ENCODE measurements at regions of chr1 and their contacts with region 1.

Region 1: DNA sequence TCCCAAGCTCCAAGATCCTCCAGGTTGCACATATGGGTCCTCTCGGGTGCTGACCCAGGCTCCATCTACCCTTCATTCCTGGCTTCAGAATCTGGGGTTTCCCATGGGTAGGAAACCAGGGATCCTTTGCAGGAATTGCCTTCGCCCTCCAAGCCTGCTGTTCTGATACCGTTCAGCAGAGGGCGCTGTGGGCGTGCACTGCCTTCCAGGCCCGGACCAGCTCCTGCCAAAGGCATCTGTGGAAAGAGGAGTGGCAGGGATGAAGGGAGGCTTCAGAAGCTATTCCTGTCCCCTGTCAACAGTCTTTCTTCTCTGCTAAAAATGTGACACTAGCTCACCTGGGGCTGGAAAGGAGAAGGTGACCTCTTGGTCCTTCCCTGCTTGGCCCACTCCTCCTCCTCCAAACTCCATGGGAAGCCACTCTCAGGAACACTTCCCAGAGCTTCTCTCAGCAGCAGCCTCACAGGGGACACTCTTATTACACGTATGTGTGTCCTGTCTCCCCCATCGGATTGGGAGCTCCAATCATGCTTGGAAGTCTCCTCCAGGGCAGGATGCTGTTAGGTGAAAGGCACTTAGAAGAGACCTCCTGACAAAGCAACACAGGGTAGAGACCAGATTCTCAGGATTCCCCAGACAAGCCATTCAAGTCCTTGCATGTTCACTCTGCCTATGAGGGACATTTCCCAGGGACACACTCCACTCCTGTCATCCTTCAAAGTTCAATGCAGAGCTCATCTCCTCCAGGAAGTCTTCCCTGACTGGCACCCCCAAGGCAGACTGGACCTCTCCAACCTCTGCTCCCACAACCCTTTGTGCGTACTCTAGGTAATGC is 71.3 kb downstream of the VWA5B1 start:
- DNase-seq: peak; percentile 61
- ATAC-seq: peak; percentile 16 to 50

Region 2: DNA sequence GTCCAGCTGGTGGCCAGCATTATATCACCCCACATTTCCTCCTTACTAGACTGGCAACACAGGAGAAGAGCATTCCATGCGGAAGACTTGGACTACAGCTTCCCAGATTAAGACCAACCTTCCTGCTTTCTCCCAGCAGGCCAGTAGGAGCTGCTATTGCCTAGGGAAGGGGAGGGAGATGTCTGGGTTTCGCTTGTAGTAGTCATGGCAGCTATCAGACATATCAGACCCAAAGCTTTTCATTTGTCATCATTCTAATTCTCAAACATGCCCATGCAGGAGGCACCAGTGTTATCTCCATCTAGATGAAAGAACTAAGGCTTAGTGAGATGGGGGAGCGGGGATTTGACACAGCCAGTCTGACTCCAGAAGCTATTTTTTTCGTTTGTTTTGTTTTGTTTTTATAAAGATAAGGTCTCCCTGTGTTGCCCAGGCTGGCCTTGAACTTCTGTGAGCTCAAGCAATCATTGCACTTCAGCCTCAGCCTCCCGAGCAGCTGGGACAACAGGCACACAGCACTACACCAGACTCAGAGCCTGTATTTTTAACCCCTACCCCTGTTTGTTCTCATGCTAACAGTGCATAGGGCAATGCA is 387.1 kb before region 1 on chr1:
- intact Hi-C with region 1: no loop called
- DNase-seq: peak; percentile 58
- ATAC-seq: peak; percentile 80 to 83

Region 3: DNA sequence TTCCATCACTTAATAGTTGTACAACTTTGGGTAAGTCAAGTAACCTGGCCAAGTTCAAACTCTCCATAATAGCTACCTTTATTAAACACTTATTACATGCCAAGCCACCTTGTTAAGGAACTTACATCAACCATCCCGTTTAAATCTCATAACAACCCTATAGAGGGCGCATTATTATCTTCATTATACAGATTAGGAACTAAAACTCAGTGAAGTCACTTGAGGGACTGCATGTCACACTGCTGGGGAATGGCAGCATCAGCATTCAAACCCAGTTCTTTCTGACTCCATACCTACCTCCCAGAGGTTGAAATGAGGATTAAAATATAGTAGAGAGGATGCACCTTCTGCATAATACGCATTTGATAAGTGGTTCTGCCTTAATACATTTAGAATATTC is 128.6 kb before region 1 on chr1:
- intact Hi-C with region 1: loop called (anchors 10 kb)
- DNase-seq: no peak
- ATAC-seq: peak in 1 of 2 donors; percentile 36

Region 4: GRCh38 chr1:20386323-20387081 is 24.5 kb after region 1 on chr1:
- intact Hi-C with region 1: no loop called
- DNase-seq: no peak
- ATAC-seq: no peak

Region 5: GRCh38 chr1:21896652-21897532 is 1534.9 kb after region 1 on chr1:
- intact Hi-C with region 1: no loop called
- DNase-seq: peak; percentile 88
- ATAC-seq: peak; percentile 76 to 86

Measured in left cardiac atrium (tissue), 4 donors.